Naive thymus-derived CD4-positive, alpha-beta T cell (primary cell): ENCODE measurements at regions of chr3 and their contacts with region 1.

Region 1: DNA sequence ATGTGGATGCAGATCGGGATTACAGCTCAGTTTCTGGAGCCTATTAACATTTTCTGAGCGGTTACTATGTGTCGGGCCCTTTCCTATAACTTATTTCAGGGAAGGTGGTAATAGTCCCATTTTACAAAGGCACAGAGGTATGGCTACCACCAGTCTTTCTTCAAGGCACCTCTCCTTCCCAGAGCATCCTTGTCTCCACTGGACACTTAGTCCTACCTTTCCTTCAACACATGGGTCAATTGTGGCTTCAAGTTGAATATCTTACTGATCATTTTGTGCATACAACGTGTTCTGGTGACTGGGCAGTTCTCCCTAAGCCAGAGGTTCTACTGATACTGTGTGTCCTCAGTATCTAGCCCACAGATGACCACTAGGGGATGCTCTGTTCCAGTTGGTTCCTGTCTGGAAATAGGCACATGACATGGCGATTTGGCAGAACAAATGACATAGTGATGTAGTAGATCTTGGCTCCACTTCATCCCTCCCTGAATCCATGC is 60.7 kb upstream of the CMTM8 start:
- DNase-seq: peak in 8 of 9 donors; percentile 15 to 45 (median 36)
- ATAC-seq: peak; percentile 85
- H3K4me3 ChIP-seq: no peak overlapping the region
- H3K4me3 Mint-ChIP-seq: peak overlapping the region in 9 of 10 donors; percentile 37 to 78 (median 53)
- H3K27ac ChIP-seq: no peak overlapping the region
- H3K27ac Mint-ChIP-seq: peak overlapping the region in 4 of 9 donors; percentile 11 to 83 (median 50)
- H3K4me1 ChIP-seq: peaks cover 0 to 6% of the 10 kb centered on the region in 2 donors
- H3K4me1 Mint-ChIP-seq: peaks cover 8 to 16% (median 14%) of the 10 kb centered on the region in 7 donors
- H3K27me3 ChIP-seq: no peaks in the 10 kb centered on the region
- H3K27me3 Mint-ChIP-seq: peaks cover 0 to 15% (median 0%) of the 10 kb centered on the region in 5 donors

Region 2: GRCh38 chr3:32216172-32216783 is 38.5 kb after region 1 on chr3:
- CTCF ChIA-PET with region 1: no interaction called
- POLR2A ChIA-PET with region 1: no interaction called
- intact Hi-C with region 1: no loop called
- DNase-seq: no peak
- ATAC-seq: no peak
- H3K4me3 ChIP-seq: no peak overlapping the region
- H3K4me3 Mint-ChIP-seq: no peak overlapping the region
- H3K27ac ChIP-seq: no peak overlapping the region
- H3K27ac Mint-ChIP-seq: no peak overlapping the region
- H3K4me1 ChIP-seq: no peaks in the 10 kb centered on the region
- H3K4me1 Mint-ChIP-seq: no peaks in the 10 kb centered on the region
- H3K27me3 ChIP-seq: no peaks in the 10 kb centered on the region
- H3K27me3 Mint-ChIP-seq: peaks cover 0 to 19% (median 5%) of the 10 kb centered on the region in 5 donors

Region 3: GRCh38 chr3:32296256-32297204 is 118.8 kb after region 1 on chr3:
- CTCF ChIA-PET with region 1: interaction called, 10 read pairs
- POLR2A ChIA-PET with region 1: interaction called, 4 read pairs
- intact Hi-C with region 1: loop called (anchors 1 kb)
- DNase-seq: peak; percentile 35 to 73 (median 62)
- ATAC-seq: peak; percentile 89
- H3K4me3 ChIP-seq: no peak overlapping the region
- H3K4me3 Mint-ChIP-seq: peak overlapping the region; percentile 60 to 80 (median 72)
- H3K27ac ChIP-seq: peak overlapping the region; percentile 53
- H3K27ac Mint-ChIP-seq: peak overlapping the region; percentile 89 to 99 (median 95)
- H3K4me1 ChIP-seq: peaks cover 15 to 18% of the 10 kb centered on the region in 2 donors
- H3K4me1 Mint-ChIP-seq: peaks cover 21 to 65% (median 39%) of the 10 kb centered on the region in 7 donors
- H3K27me3 ChIP-seq: no peaks in the 10 kb centered on the region
- H3K27me3 Mint-ChIP-seq: no peaks in the 10 kb centered on the region

Region 4: DNA sequence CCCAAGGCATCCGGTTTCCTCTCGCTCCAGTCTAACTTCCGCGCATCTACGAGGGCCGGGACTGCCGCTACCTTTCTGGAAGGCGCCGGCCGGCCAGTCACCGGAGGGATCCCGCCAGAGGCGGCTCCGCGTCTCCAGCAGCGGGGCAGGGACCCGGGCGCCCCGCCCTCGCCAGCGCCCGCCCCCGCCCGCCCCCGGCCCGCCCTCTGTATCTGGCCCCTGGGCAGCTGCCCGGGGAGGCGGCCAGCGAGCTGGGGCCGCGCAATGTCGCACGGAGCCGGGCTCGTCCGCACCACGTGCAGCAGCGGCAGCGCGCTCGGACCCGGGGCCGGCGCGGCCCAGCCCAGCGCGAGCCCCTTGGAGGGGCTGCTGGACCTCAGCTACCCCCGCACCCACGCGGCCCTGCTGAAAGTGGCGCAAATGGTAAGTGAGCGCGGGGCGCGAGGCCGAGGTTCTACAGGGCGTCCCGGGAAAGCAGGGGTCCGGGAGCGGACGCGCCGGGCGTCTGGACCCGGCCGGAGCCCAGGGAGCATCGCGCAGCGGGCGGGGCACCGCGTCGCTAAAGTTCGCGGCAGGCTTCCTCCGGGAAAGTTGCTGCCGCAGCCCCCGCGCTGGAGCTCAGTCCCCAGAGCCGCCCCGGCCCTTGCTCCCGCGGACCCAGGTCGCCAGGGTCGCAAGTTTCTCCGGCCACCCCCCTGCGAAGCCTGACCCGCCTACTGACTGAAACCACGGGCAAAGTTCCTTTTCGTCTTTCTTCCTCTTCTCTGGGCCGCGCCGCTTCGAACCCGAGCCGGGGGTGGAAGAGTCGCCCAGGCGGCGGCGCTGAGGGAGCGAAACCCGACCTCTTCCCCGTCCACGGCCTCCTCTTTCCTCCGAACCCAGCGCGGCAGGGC is 214.1 kb after region 1 on chr3 and contains the start of gene CMTM7:
- CTCF ChIA-PET with region 1: interaction called, 4 read pairs
- POLR2A ChIA-PET with region 1: no interaction called
- intact Hi-C with region 1: loop called in 1 of 2 experiments (anchors 1 kb)
- DNase-seq: peak; percentile 33 to 68 (median 62)
- ATAC-seq: peak; percentile 75
- H3K4me3 ChIP-seq: peak within 1 kb of the TSS; percentile 81
- H3K4me3 Mint-ChIP-seq: peak within 1 kb of the TSS; percentile 84 to 99 (median 98)
- H3K27ac ChIP-seq: peak within 1 kb of the TSS; percentile 83
- H3K27ac Mint-ChIP-seq: peak within 1 kb of the TSS; percentile 93 to 100 (median 98)
- H3K4me1 ChIP-seq: peaks cover 17 to 25% of the 10 kb centered on the region in 2 donors
- H3K4me1 Mint-ChIP-seq: peaks cover 30 to 70% (median 55%) of the 10 kb centered on the region in 7 donors
- H3K27me3 ChIP-seq: no peaks in the 10 kb centered on the region
- H3K27me3 Mint-ChIP-seq: no peaks in the 10 kb centered on the region
- total RNA-seq, gene CMTM7: 38.6 to 60.1 (median 49.5) TPM

Region 5: DNA sequence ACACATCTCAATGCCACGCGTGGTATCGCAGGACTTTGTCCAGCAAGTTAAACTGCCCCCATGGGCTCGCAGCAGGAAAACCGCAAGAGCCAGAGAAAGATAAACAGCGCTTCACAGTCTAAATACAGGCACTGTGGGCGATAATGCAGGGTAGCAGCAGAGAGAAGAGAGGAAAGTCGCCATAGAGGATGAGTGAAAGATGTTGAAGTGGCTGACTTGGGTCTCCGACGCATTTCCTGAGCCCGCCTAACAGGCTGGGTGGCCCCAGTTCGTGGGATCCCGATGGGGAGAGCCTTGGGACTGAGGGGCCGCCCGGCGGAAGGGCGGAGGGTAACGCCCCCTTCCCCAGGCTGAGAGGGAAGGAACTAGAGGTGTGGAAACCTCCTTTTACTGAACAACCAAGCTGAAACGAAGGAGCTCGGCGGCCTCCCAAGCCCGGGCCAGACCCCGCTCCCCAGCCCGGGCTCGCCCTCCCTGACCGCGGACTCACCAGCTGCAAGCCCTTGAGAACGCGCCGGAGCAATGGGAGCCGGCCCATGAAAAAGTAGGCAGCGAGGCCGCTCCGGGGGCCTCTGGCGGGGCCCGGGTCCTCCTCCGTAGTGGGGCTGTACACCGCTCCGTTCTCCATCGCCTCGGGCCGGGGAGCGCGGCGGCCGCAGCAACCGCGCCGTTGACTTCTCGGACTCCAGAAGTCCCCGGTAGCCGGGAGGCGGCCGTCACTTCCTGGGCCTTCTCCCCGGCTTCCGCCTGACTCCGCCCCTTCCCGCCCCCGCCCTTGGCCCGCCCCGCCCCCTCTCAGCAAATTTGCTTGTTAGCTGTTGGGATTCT is 324.6 kb after region 1 on chr3 and contains the start of gene CMTM6:
- CTCF ChIA-PET with region 1: interaction called, 5 read pairs
- POLR2A ChIA-PET with region 1: no interaction called
- intact Hi-C with region 1: loop called (anchors 5 to 10 kb)
- DNase-seq: peak; percentile 49 to 77 (median 70)
- ATAC-seq: peak; percentile 92
- H3K4me3 ChIP-seq: peak within 1 kb of the TSS; percentile 89
- H3K4me3 Mint-ChIP-seq: peak within 1 kb of the TSS; percentile 79 to 97 (median 93)
- H3K27ac ChIP-seq: peak within 1 kb of the TSS; percentile 98
- H3K27ac Mint-ChIP-seq: peak within 1 kb of the TSS; percentile 86 to 98 (median 90)
- H3K4me1 ChIP-seq: peaks cover 6 to 23% of the 10 kb centered on the region in 2 donors
- H3K4me1 Mint-ChIP-seq: peaks cover 28 to 48% (median 43%) of the 10 kb centered on the region in 7 donors
- H3K27me3 ChIP-seq: no peaks in the 10 kb centered on the region
- H3K27me3 Mint-ChIP-seq: peaks cover 0 to 4% (median 0%) of the 10 kb centered on the region in 5 donors
- total RNA-seq, gene CMTM6: 24.1 to 61.1 (median 38.1) TPM

Region 6: GRCh38 chr3:32667122-32667521 is 489.4 kb after region 1 on chr3:
- CTCF ChIA-PET with region 1: no interaction called
- POLR2A ChIA-PET with region 1: no interaction called
- intact Hi-C with region 1: loop called in 1 of 2 experiments (anchors 2 kb)
- DNase-seq: no peak
- ATAC-seq: no peak
- H3K4me3 ChIP-seq: no peak overlapping the region
- H3K4me3 Mint-ChIP-seq: no peak overlapping the region
- H3K27ac ChIP-seq: no peak overlapping the region
- H3K27ac Mint-ChIP-seq: no peak overlapping the region
- H3K4me1 ChIP-seq: no peaks in the 10 kb centered on the region
- H3K4me1 Mint-ChIP-seq: no peaks in the 10 kb centered on the region
- H3K27me3 ChIP-seq: no peaks in the 10 kb centered on the region
- H3K27me3 Mint-ChIP-seq: peaks cover 0 to 13% (median 0%) of the 10 kb centered on the region in 5 donors